Gastrocnemius medialis (tissue), 4 donors: ENCODE measurements at regions of chr7 and their contacts with region 1.

Region 1: DNA sequence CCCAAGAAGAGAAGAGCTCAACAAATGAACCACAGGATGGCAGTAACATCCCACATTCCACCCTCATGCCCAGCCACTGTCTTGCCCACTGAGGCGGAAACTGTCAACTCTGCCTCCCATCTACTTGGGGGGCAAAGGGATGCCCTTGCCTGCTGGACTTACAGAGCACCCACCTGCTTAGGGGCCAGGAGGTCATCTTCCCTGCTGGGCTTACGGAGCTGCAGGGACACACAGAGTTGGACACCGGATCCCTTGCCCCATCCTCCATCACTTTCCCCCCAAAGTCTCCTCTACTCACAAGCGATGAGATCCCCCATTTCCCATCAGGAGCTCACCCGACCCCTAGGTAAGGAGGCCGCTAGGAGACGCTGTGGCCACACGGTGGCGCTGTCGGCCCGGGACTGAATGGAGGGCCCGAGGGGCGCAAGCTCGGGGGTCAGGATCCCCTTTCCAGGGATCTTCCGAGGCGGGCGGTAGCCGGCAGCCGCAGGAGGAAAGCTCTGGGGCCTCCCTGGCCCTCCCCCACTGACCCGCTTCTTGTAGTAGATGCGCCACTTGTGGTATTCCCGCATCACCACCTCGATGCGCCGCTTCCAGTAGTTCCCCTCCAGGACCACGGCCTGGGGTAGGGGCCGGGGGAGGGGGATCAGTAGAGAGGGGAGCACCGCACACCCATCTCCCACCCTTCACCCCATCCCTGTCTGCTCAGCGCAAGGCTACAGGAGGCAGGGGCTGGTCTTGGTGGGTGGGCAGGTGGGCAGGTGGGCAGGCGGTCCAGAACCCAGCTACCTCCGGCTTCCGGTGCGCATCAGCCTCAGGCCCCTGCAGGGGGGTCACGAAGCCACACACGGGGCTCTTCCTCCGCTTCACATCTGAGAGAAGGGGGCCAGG is 17.3 kb downstream of the MLXIPL start:
- DNase-seq: no peak
- ATAC-seq: peak in 1 of 2 donors; percentile 27
- H3K4me3 ChIP-seq: no peak overlapping the region
- H3K27ac ChIP-seq: no peak overlapping the region
- H3K4me1 ChIP-seq: peaks cover 15 to 19% of the 10 kb centered on the region in 2 donors
- H3K27me3 ChIP-seq: no peaks in the 10 kb centered on the region
- CTCF ChIP-seq: peak; percentile 92 to 97 (median 93)
- POLR2A ChIP-seq: no peak

Region 2: GRCh38 chr7:73660001-73660400 is 53.0 kb after region 1 on chr7:
- in situ Hi-C with region 1: loop called (anchors 5 to 10 kb)
- intact Hi-C with region 1: no loop called
- DNase-seq: no peak
- ATAC-seq: no peak
- H3K4me3 ChIP-seq: no peak overlapping the region
- H3K27ac ChIP-seq: no peak overlapping the region
- H3K4me1 ChIP-seq: no peaks in the 10 kb centered on the region
- H3K27me3 ChIP-seq: peaks cover 0 to 3% (median 0%) of the 10 kb centered on the region in 3 donors
- CTCF ChIP-seq: no peak
- POLR2A ChIP-seq: no peak

Region 3: DNA sequence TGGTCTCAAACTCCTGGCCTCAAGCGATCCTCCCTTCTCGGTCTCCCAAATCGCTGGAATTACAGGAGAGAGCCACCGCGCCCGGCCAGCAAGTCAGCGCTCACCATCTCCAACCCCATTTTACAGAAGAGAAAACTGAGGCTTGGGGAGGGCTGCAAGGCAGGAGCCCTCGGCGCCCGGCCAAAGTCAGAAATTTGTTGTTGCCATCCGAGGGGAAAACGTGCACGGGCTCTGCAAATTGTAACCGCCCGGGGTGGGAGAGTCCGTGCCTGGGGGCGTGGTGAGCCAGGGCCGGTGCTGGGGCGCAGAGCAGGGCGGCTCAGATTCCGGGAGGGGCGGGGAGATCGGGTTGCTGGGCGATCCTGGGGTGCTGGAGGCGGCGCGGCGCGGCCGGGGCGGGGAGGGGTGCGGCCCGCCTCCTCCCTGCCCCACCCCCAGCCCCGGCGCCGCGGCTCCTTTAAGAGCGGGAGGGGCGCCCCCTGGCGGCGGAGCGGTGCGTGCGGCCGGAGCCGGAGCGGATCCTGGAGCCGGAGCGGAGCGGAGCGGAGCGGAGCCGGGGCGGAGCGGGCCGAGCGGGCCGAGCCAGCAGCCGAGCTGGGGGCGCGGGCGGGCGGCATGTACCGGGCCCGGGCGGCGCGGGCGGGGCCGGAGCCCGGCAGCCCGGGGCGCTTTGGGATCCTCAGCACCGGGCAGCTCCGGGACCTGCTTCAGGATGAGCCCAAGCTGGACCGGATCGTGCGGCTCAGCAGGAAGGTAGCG is 60.5 kb after region 1 on chr7 and contains the start of gene VPS37D:
- in situ Hi-C with region 1: loop called (anchors 5 to 10 kb)
- intact Hi-C with region 1: loop called (anchors 1 kb)
- DNase-seq: peak; percentile 72 to 79
- ATAC-seq: peak; percentile 95 to 98
- H3K4me3 ChIP-seq: peak within 1 kb of the TSS; percentile 55 to 66 (median 57)
- H3K27ac ChIP-seq: no peak within 1 kb of the TSS
- H3K4me1 ChIP-seq: peaks cover 3 to 8% of the 10 kb centered on the region in 2 donors
- H3K27me3 ChIP-seq: peaks cover 0 to 3% (median 0%) of the 10 kb centered on the region in 3 donors
- CTCF ChIP-seq: peak in 4 of 5 experiments; percentile 95 to 98 (median 97)
- POLR2A ChIP-seq: no peak
- total RNA-seq, gene VPS37D: 0.64 to 2.5 (median 1.4) TPM

Region 4: GRCh38 chr7:73718905-73719805 is 112.1 kb after region 1 on chr7 and contains the start of gene STX1A:
- in situ Hi-C with region 1: loop called in 2 of 4 experiments (anchors 5 to 10 kb)
- intact Hi-C with region 1: no loop called
- DNase-seq: peak; percentile 36 to 62
- ATAC-seq: peak; percentile 76 to 83
- H3K4me3 ChIP-seq: peak within 1 kb of the TSS; percentile 65 to 95 (median 81)
- H3K27ac ChIP-seq: peak within 1 kb of the TSS; percentile 43 to 78 (median 60)
- H3K4me1 ChIP-seq: peaks cover 10 to 28% of the 10 kb centered on the region in 2 donors
- H3K27me3 ChIP-seq: no peaks in the 10 kb centered on the region
- CTCF ChIP-seq: no peak
- POLR2A ChIP-seq: peak; percentile 51 to 72
- total RNA-seq, gene STX1A: 0.83 to 8.1 (median 3.2) TPM

Region 5: GRCh38 chr7:73726083-73726466 is 119.0 kb after region 1 on chr7:
- in situ Hi-C with region 1: loop called in 3 of 4 experiments (anchors 5 kb)
- intact Hi-C with region 1: loop called (anchors 1 kb)
- DNase-seq: no peak
- ATAC-seq: no peak
- H3K4me3 ChIP-seq: no peak overlapping the region
- H3K27ac ChIP-seq: no peak overlapping the region
- H3K4me1 ChIP-seq: peaks cover 3 to 4% of the 10 kb centered on the region in 2 donors
- H3K27me3 ChIP-seq: peaks cover 0 to 4% (median 0%) of the 10 kb centered on the region in 3 donors
- CTCF ChIP-seq: peak in 2 of 5 experiments; percentile 3 to 9
- POLR2A ChIP-seq: no peak

Region 6: GRCh38 chr7:73851410-73852234 is 244.6 kb after region 1 on chr7:
- in situ Hi-C with region 1: loop called in 2 of 4 experiments (anchors 10 to 25 kb)
- intact Hi-C with region 1: no loop called
- DNase-seq: no peak
- ATAC-seq: peak; percentile 34 to 87
- H3K4me3 ChIP-seq: no peak overlapping the region
- H3K27ac ChIP-seq: peak overlapping the region; percentile 27 to 56 (median 42)
- H3K4me1 ChIP-seq: no peaks in the 10 kb centered on the region
- H3K27me3 ChIP-seq: peaks cover 0 to 5% (median 0%) of the 10 kb centered on the region in 3 donors
- CTCF ChIP-seq: no peak
- POLR2A ChIP-seq: no peak